Activated naive CD4-positive, alpha-beta T cell treated with anti-CD3 and anti-CD28 coated beads for 36 hours (primary cell): ENCODE measurements at regions of chr15 and their contacts with region 1.

Region 1: DNA sequence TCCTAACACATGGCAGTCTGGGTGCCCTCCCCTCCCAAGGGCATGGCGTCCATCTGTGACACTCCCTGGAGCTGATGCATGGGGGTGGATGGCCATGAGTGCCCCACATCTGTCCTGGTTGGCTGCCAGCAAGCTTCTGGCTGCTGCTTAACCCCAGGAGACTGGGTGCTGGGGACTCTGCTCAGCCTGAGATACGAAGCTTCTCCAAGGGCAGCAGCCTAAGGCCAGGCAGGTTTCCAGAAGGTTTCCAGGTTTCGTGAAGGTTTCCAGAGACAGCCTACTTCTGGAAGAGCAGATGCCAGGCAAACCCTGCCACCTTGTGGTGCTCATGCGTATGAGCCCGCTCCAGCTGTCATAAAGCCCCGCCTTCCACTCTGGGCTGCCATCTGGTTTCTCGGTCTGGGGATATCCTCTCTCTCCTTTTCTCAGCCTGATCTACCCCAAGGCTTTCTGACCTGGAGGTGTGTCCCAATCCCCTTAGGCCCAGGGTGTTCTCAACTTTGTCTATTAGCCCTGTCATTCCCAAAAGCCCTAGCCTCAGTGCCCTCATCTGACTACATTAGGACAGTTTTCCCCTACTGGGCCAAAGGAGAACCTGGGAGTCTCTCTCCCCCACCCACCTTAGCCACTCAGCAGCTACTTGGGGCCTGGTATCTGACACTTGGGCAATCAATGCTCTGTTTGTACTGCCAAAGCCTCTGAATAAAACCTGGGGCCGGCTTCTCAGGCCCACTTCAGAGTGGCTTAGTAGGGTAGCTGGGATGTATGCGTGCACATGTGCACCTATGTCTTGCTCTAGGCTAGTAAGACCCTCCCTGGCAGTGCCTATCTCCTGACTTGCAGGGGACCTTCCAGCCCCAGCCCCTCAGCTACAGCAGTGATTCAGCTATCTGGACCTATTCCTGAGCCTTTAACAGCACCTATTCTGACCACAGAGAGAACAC is 12.0 kb downstream of the MRPL46 start:
- DNase-seq: peak; percentile 76
- H3K4me3 Mint-ChIP-seq: no peak overlapping the region
- H3K27ac Mint-ChIP-seq: no peak overlapping the region
- H3K4me1 Mint-ChIP-seq: peaks cover 5% of the 10 kb centered on the region
- H3K27me3 Mint-ChIP-seq: no peaks in the 10 kb centered on the region

Region 2: DNA sequence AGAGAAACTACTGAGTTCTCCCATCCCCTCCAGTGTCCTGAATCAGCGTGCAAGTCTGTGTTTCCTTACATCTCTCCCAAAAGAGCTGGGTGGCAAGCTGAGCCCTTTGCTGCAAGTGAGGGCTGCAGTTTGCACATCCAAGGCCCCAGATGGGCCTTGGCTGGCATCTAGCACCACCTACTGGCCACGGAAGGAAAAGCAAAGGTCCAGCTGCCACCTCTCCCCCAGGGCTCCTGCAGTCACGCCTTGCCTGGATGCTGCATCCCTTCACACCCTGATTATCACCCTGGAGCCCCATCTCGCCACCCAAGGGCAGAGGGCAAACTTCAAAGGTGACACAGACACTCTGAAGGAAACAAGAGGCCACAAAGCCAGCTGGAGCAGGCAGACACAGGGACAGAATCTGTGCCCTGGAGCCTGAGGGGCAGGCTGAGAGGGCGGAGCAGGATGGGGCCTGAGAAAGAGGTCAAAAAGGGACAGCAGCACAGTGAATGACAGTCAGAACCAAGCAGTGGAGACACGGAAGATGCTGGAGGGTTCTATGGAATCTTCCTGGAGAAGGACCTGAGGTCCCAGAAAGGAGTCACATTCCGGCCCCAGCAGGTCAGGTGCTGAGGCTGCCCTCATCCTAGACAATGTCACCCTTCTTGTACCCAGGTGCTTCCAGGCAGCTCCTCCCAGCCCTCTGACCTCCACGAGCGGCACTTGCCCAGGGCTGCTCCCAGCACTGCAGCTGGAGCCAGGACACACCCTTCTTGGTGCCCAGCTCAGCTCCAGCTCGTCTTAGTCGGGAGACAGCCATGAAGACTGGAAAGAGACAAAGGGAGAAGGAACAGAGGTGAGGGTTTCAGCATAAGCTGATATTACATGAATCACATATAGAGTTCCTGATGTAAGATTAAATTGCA is 180.3 kb before region 1 on chr15:
- CTCF ChIA-PET with region 1: interaction called, 20 read pairs
- intact Hi-C with region 1: no loop called
- DNase-seq: peak; percentile 80
- H3K4me3 Mint-ChIP-seq: no peak overlapping the region
- H3K27ac Mint-ChIP-seq: no peak overlapping the region
- H3K4me1 Mint-ChIP-seq: no peaks in the 10 kb centered on the region
- H3K27me3 Mint-ChIP-seq: peaks cover 11% of the 10 kb centered on the region

Region 3: GRCh38 chr15:88331280-88331679 is 123.9 kb before region 1 on chr15:
- CTCF ChIA-PET with region 1: interaction called, 3 read pairs
- intact Hi-C with region 1: loop called (anchors 5 kb)
- DNase-seq: peak; percentile 77
- H3K4me3 Mint-ChIP-seq: no peak overlapping the region
- H3K27ac Mint-ChIP-seq: no peak overlapping the region
- H3K4me1 Mint-ChIP-seq: no peaks in the 10 kb centered on the region
- H3K27me3 Mint-ChIP-seq: peaks cover 4% of the 10 kb centered on the region

Region 4: GRCh38 chr15:88385078-88385700 is 70.0 kb before region 1 on chr15:
- CTCF ChIA-PET with region 1: no interaction called
- intact Hi-C with region 1: loop called (anchors 5 kb)
- DNase-seq: peak; percentile 55
- H3K4me3 Mint-ChIP-seq: no peak overlapping the region
- H3K27ac Mint-ChIP-seq: no peak overlapping the region
- H3K4me1 Mint-ChIP-seq: peaks cover 8% of the 10 kb centered on the region
- H3K27me3 Mint-ChIP-seq: peaks cover 14% of the 10 kb centered on the region

Region 5: GRCh38 chr15:89041507-89041906 is 586.4 kb after region 1 on chr15:
- CTCF ChIA-PET with region 1: no interaction called
- intact Hi-C with region 1: no loop called
- DNase-seq: no peak
- H3K4me3 Mint-ChIP-seq: no peak overlapping the region
- H3K27ac Mint-ChIP-seq: no peak overlapping the region
- H3K4me1 Mint-ChIP-seq: no peaks in the 10 kb centered on the region
- H3K27me3 Mint-ChIP-seq: no peaks in the 10 kb centered on the region